ENCODE measurements at regions of chr18 and their contacts with region 1.

Region 1: GRCh38 chr18:34322365-34323289 is 97.9 kb upstream of the NOL4 start:
- DNase-seq: peak; percentile 50 to 81 (median 70)
- H3K4me3 ChIP-seq: peak overlapping the region in 43 of 59 donors; percentile 6 to 52 (median 32)
- H3K27ac ChIP-seq: no peak overlapping the region
- H3K27me3 ChIP-seq: no peaks in the 10 kb centered on the region
- CTCF ChIP-seq: peak; percentile 49 to 91 (median 81)

Region 2: GRCh38 chr18:33839441-33840211 is 483.0 kb before region 1 on chr18:
- intact Hi-C with region 1: loop called in 1 of 2 experiments (anchors 10 kb)
- DNase-seq: peak in 8 of 10 donors; percentile 10 to 51 (median 44)
- H3K4me3 ChIP-seq: peak overlapping the region in 56 of 59 donors; percentile 3 to 60 (median 43)
- H3K27ac ChIP-seq: no peak overlapping the region
- H3K27me3 ChIP-seq: no peaks in the 10 kb centered on the region
- CTCF ChIP-seq: peak; percentile 57 to 84 (median 73)

Region 3: DNA sequence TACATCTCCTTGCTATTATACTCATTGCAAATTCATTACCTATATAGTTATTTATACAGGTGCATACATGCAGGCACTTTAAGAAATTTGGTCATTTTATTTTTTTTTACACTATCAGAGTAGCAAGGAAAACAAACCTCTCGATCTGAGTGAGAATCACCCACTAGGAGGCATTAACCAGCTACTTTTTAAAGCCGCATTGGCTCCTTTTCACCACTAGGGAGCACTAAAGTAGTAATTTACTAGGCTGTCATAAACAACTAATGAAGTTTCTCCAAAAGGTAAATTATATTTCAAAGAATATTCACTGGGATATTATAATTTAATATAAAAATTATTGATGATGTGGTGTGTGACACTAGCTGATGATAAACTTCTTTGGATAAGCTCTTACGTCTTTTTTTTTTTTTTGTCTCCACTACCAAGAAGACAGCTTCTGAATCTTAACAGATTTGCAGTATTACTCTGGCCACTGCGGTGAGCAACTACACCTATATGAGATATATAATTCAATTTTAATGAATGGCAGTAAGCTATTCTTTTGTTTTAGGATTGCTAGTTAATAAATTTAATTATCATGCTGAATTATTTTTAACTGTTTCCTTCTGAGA is 199.8 kb before region 1 on chr18:
- intact Hi-C with region 1: loop called (anchors 2 to 5 kb)
- DNase-seq: peak in 3 of 10 donors; percentile 3 to 58 (median 40)
- H3K4me3 ChIP-seq: no peak overlapping the region
- H3K27ac ChIP-seq: no peak overlapping the region
- H3K27me3 ChIP-seq: no peaks in the 10 kb centered on the region
- CTCF ChIP-seq: peak; percentile 84 to 99 (median 94)

Measured in dorsolateral prefrontal cortex (tissue), 120 donors.